ENCODE measurements at regions of chr18 and their contacts with region 1.

Region 1: DNA sequence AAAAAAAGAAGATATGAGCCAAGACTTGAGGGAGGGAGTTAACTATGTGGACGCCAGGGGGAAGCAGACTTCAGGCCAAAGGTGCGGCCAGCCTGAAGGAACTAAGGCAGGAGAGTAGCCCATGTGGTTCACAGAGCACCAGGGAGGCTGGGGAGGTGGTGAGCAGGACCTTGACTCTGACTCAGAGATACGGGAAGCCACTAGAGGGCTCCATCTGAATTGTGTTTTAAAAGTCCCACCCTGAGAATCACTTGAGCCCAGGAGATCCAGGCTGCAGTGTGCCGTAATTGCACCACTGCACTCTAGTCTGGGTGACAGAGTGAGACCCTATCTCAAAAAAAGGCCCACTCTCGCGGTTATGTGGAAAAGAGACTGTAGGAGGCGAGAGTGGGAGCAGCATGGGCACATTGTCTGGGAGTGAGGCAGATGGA is 12.3 kb downstream of the CEP192 start:
- DNase-seq: peak; percentile 62
- ATAC-seq: peak; percentile 95
- H3K4me3 ChIP-seq: no peak overlapping the region
- H3K27ac ChIP-seq: no peak overlapping the region
- H3K4me1 ChIP-seq: 0 out of 2 replicates have a peak, but pooled peaks cover 2% of the 10 kb centered on the region
- H3K27me3 ChIP-seq: no peaks in the 10 kb centered on the region
- CTCF ChIP-seq: peak; percentile 70

Region 2: DNA sequence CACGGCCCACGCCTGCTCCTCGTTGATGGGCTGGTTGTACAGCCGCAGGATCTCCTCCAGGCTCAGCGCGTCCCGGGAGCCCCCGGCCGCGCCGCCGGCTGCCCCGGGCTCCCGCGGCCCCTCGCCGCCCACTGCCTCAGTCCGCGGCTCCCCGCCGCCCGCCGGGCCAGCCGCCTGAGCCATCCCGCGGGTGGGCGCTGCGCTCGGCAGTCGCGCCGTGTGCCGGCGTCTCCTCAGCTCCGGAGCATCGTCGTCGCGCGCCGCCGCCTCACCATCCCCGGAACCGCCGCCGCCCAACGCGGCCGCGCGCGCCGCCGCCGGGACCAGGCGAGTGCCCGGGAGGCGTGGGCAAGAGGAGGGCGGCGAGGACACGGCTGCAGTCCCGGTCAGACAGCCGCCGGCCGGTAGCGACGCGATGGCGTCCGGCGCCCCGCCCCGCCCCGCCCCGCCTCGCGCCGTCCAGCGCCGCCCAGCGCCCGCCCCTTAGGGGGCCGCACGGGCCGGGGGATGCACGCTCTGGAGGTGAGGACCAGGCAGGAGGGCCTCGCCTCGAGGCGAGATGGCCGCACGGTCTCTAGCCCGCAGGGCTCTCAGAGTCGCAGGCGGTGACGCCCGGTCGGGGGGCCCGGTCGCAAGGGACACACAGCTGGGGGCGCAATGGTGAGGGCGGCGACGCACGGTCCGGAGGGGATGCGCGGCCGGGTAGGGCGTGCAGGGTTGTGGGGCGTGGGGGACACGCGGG is 345.6 kb before region 1 on chr18 and contains the start of gene SPIRE1:
- CTCF ChIA-PET with region 1: no interaction called
- POLR2A ChIA-PET with region 1: no interaction called
- intact Hi-C with region 1: no loop called
- DNase-seq: peak; percentile 74
- ATAC-seq: peak; percentile 77
- H3K4me3 ChIP-seq: peak within 1 kb of the TSS; percentile 78
- H3K27ac ChIP-seq: peak within 1 kb of the TSS; percentile 27
- H3K4me1 ChIP-seq: peaks cover 41% of the 10 kb centered on the region
- H3K27me3 ChIP-seq: no peaks in the 10 kb centered on the region
- CTCF ChIP-seq: no peak
- total RNA-seq, gene SPIRE1: 29.9 and 32.4 TPM in 2 replicates

Region 3: DNA sequence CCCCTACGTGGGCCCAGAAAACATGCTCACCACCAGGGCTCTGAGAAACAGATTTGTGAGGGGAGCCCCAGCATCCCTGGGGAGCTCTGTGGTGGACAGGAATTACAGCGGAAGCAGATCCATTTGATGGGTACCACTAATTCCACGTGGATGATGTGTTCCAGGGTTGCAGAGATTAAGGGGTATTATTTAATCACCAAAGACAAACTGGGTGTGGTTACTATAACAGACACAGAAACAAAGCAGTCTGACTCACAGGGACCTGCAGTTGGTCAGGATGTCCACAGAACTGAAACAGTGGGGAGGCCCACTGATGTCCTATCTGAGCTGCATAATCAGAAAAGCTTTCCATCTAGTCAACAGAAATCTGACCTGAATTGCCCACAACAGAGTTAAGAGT is 234.9 kb before region 1 on chr18:
- CTCF ChIA-PET with region 1: no interaction called
- POLR2A ChIA-PET with region 1: no interaction called
- intact Hi-C with region 1: no loop called
- DNase-seq: peak; percentile 25
- ATAC-seq: peak; percentile 68; the same call in 1 of the 2 replicates
- H3K4me3 ChIP-seq: no peak overlapping the region
- H3K27ac ChIP-seq: no peak overlapping the region
- H3K4me1 ChIP-seq: no peaks in the 10 kb centered on the region; the same call in 1 of the 2 replicates
- H3K27me3 ChIP-seq: no peaks in the 10 kb centered on the region
- CTCF ChIP-seq: no peak

Region 4: DNA sequence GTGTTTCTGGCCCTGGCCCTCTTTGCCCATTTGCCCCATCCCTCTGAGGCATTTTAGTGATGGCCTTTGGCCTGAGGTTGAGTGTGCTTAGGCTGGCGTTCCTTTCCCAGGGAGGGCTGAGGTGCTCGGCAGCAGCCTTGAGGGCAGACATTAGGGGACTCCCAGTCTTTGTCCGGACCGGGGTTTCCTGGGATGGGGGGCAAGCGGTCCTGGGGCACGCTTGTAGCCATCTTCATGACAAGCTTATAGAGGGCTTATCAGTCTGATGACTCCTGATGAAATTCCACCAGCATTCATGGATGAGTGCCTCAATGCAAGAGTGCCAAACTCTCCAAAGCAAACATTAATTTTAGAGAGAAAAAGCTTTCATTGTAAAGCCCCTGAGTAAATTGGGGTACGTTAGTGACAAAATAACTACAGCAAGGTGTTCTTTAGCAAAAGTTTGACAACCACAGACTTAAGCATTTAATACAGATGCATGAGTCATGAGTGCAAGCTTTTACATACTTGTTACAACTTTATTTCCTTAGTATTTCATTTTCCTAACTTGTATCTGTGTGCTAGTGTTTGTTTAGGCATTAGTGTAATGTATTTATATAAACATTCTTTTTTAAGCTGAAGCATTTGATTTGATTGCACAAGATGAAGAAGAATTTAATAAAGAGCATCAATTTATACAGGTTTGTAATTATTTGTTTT is 33.3 kb after region 1 on chr18:
- CTCF ChIA-PET with region 1: no interaction called
- POLR2A ChIA-PET with region 1: no interaction called
- intact Hi-C with region 1: loop called (anchors 2 kb)
- DNase-seq: peak; percentile 29
- ATAC-seq: peak; percentile 93
- H3K4me3 ChIP-seq: no peak overlapping the region
- H3K27ac ChIP-seq: no peak overlapping the region
- H3K4me1 ChIP-seq: 0 out of 2 replicates have a peak, but pooled peaks cover 4% of the 10 kb centered on the region
- H3K27me3 ChIP-seq: no peaks in the 10 kb centered on the region
- CTCF ChIP-seq: no peak

Region 5: DNA sequence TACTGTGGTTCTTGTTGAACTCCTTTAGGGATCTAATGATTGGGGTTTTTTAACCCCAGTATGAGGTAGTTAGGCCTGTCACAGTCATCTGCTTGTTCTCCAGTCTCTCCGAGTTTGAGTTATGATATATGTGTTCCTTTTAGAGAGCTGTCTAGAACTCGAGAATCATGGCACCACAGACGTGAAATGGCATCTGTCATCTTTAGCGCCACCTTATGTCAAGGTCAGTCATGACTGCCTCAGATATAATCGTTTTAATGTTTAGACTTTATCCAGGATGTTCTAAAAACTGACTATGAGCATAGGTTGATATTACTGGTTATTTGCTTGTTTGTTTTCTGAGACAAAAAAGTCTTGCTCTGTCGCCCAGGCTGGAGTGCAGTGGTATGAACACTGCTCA is 99.9 kb after region 1 on chr18:
- CTCF ChIA-PET with region 1: no interaction called
- POLR2A ChIA-PET with region 1: no interaction called
- intact Hi-C with region 1: loop called (anchors 1 kb)
- DNase-seq: peak; percentile 36
- ATAC-seq: peak; percentile 68
- H3K4me3 ChIP-seq: no peak overlapping the region
- H3K27ac ChIP-seq: no peak overlapping the region
- H3K4me1 ChIP-seq: no peaks in the 10 kb centered on the region
- H3K27me3 ChIP-seq: no peaks in the 10 kb centered on the region
- CTCF ChIP-seq: peak; percentile 70

Region 6: GRCh38 chr18:13159579-13159978 is 156.1 kb after region 1 on chr18:
- CTCF ChIA-PET with region 1: no interaction called
- POLR2A ChIA-PET with region 1: no interaction called
- intact Hi-C with region 1: loop called (anchors 1 kb)
- DNase-seq: peak; percentile 81
- ATAC-seq: peak; percentile 73; the same call in 1 of the 2 replicates
- H3K4me3 ChIP-seq: no peak overlapping the region
- H3K27ac ChIP-seq: no peak overlapping the region
- H3K4me1 ChIP-seq: no peaks in the 10 kb centered on the region
- H3K27me3 ChIP-seq: no peaks in the 10 kb centered on the region
- CTCF ChIP-seq: peak; percentile 83